HEK293 (cell line): ENCODE measurements at regions of chr1 and their contacts with region 1.

Region 1: DNA sequence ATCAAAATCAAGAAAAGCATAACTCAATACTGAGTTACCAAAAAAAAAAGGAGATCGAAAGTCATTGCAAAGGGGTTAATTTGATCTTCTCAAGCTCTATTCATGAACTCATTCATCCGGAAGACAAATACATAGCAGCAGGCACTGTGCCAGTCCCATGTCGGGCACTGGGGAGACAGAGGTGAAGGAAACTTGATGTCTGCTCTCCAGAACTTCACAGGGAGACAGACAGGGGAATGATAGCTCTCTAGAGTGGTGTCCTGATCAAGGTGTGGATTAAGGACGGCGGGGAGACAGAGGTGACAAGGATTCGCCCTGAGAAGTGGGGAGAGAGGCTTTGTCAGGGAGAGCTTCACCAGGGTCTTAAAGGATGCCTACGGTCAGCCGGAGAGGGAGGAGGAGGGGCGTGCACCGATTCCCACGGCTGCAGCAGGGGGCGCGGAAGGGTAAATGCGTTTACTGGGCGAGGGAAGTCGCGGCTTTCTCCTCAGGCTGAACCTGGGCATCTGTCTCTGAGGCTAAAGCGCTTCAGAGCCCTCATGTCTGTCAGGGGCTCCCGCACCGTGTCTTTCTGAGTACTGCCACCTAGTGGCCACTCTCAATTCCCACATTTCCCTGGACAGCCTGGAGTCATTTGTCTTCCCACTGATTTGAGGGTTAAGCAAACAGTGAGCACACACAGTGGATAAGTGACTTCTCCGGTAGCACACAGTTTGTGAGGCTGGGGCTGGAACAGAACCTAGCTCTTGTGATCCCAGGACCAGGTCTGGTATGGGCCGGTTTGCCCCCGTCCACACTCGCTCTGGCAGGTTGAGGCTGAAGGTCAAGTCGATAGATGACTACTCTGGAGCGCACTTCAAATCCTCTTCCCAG is 152.8 kb downstream of the TENT5C start:
- H3K4me3 ChIP-seq: peak overlapping the region; percentile 47
- H3K27ac ChIP-seq: peak overlapping the region; percentile 21; the same call in 1 of the 2 replicates
- H3K4me1 ChIP-seq: peaks cover 4% of the 10 kb centered on the region
- CTCF ChIP-seq: peak; percentile 95

Region 2: GRCh38 chr1:117512743-117513321 is 245.8 kb before region 1 on chr1:
- CTCF ChIA-PET with region 1: interaction called, 35 read pairs
- POLR2A ChIA-PET with region 1: no interaction called
- H3K4me3 ChIP-seq: no peak overlapping the region
- H3K27ac ChIP-seq: no peak overlapping the region
- H3K4me1 ChIP-seq: no peaks in the 10 kb centered on the region
- CTCF ChIP-seq: peak; percentile 37; the same call in 1 of the 2 replicates

Region 3: DNA sequence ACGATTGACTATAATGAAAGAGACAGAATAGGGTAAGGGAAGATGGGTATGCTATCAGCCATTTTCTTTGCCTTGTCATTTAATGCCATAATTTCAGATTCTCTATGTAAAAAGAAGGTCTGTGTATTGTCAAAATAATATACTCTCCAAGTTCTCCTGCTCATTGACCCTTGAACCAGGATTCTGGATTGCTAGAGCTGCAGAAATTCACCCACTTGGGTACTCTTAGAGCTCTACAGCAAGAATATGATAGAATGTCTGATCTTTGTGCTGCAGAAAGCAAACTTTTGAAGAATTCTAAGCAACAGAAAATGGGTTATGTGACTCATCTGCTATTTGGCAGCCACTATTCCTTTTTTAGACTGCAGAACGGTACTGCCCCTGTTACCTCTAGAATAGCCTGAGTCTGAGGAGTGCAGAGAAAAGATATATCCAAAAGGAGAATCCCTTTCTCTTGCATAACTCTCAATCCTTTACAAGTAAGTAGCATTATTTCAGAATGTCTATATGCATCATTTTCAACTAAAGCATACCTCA is 231.0 kb before region 1 on chr1:
- CTCF ChIA-PET with region 1: interaction called, 154 read pairs
- POLR2A ChIA-PET with region 1: no interaction called
- H3K4me3 ChIP-seq: no peak overlapping the region
- H3K27ac ChIP-seq: no peak overlapping the region
- H3K4me1 ChIP-seq: no peaks in the 10 kb centered on the region
- CTCF ChIP-seq: no peak

Region 4: GRCh38 chr1:117534995-117535467 is 223.6 kb before region 1 on chr1:
- CTCF ChIA-PET with region 1: interaction called, 154 read pairs
- POLR2A ChIA-PET with region 1: no interaction called
- H3K4me3 ChIP-seq: no peak overlapping the region
- H3K27ac ChIP-seq: no peak overlapping the region
- H3K4me1 ChIP-seq: no peaks in the 10 kb centered on the region
- CTCF ChIP-seq: peak; percentile 66

Region 5: GRCh38 chr1:117541003-117541402 is 217.7 kb before region 1 on chr1:
- CTCF ChIA-PET with region 1: interaction called, 154 read pairs
- POLR2A ChIA-PET with region 1: no interaction called
- H3K4me3 ChIP-seq: no peak overlapping the region
- H3K27ac ChIP-seq: no peak overlapping the region
- H3K4me1 ChIP-seq: no peaks in the 10 kb centered on the region
- CTCF ChIP-seq: no peak

Region 6: GRCh38 chr1:117710710-117711109 is 48.0 kb before region 1 on chr1:
- CTCF ChIA-PET with region 1: interaction called, 55 read pairs
- POLR2A ChIA-PET with region 1: no interaction called
- H3K4me3 ChIP-seq: no peak overlapping the region
- H3K27ac ChIP-seq: no peak overlapping the region
- H3K4me1 ChIP-seq: no peaks in the 10 kb centered on the region
- CTCF ChIP-seq: no peak